ENCODE measurements at regions of chr11 and their contacts with region 1.

Region 1: GRCh38 chr11:62081378-62082291 is 42.2 kb upstream of the INCENP start:
- H3K4me3 ChIP-seq: no peak overlapping the region
- H3K27ac ChIP-seq: no peak overlapping the region
- H3K4me1 ChIP-seq: no peaks in the 10 kb centered on the region
- CTCF ChIP-seq: peak; percentile 76

Region 2: GRCh38 chr11:61777234-61778090 is 304.2 kb before region 1 on chr11:
- CTCF ChIA-PET with region 1: no interaction called
- POLR2A ChIA-PET with region 1: no interaction called
- H3K4me3 ChIP-seq: no peak overlapping the region
- H3K27ac ChIP-seq: no peak overlapping the region
- H3K4me1 ChIP-seq: no peaks in the 10 kb centered on the region
- CTCF ChIP-seq: no peak

Region 3: GRCh38 chr11:61792310-61793085 is 289.1 kb before region 1 on chr11 and contains the starts of genes FEN1 and TMEM258:
- CTCF ChIA-PET with region 1: interaction called, 49 read pairs
- POLR2A ChIA-PET with region 1: interaction called, 8 read pairs
- H3K4me3 ChIP-seq: peak within 1 kb of the TSS; percentile 87
- H3K27ac ChIP-seq: peak within 1 kb of the TSS; percentile 89
- H3K4me1 ChIP-seq: 0 out of 2 replicates have a peak, but pooled peaks cover 1% of the 10 kb centered on the region
- CTCF ChIP-seq: no peak

Region 4: DNA sequence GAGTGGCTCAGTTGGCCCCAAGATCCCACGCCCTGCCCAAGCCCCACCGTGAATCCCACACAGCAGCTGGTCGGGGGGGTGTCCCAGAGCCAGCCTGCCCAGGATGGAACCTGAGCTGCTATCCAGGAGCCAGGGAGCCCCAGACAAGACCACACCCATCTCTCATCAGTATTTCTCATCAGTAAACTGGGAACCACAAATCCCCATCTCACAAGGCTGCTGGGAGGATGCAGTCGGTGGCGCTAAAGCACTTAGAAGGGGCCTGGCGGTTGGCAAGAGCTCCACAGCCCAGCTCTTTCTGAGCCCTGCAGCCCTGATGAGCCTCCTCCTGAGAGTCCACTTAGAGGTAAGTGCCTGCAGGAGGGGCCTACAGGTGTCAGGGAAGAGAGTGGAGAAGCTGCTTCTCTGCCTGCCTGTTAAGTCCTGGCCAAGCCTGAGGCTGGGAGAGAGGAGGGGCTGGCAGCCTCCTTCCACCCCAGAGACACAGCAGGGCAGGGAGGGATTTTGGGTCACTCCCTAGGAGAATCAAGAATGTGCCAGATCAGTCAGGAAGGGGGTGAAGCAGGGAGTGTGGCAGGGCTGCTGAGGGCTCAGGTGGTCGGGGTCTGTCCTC is 196.4 kb before region 1 on chr11:
- CTCF ChIA-PET with region 1: interaction called, 18 read pairs
- POLR2A ChIA-PET with region 1: no interaction called
- H3K4me3 ChIP-seq: no peak overlapping the region
- H3K27ac ChIP-seq: no peak overlapping the region
- H3K4me1 ChIP-seq: no peaks in the 10 kb centered on the region; the same call in 1 of the 2 replicates
- CTCF ChIP-seq: no peak

Region 5: DNA sequence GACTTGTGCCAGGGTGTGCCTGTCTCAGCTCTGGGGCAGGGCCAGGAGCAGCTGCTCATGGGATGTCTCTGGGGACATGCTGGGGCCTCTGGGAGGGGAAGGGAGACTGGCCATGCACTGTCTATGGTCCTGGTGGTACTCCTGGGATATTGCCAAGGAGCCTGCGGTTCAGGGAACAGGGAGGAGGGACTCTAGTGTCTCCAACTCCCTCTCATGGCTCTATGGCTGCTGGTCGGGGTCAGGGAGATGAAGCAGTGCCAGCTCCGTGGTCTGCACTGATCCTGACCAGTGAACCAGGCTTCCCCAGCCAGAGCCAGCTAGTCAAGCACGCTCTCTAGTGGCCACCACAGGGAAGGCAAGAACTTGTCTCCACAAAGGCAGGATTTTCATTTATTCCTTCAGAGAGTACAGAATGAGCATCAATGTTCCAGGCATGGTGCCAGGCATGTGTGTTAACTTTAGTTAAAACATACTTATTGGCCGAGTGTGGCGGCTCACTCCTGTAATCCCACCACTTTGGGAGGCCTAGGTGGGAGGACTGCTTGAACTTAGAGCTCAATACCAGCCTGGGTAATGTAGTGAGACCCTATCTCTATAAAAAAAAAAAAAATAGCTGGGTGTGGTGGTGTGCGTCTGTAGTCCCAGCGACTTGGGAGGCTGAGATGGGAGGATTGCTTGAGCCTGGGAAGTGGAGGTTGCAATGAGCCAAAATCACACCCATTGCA is 134.0 kb before region 1 on chr11:
- CTCF ChIA-PET with region 1: interaction called, 62 read pairs
- POLR2A ChIA-PET with region 1: interaction called, 4 read pairs
- H3K4me3 ChIP-seq: no peak overlapping the region
- H3K27ac ChIP-seq: no peak overlapping the region
- H3K4me1 ChIP-seq: peaks cover 3% of the 10 kb centered on the region; the same call in 1 of the 2 replicates
- CTCF ChIP-seq: peak; percentile 77

Region 6: GRCh38 chr11:62024936-62025486 is 56.6 kb before region 1 on chr11:
- CTCF ChIA-PET with region 1: interaction called, 12 read pairs
- POLR2A ChIA-PET with region 1: no interaction called
- H3K4me3 ChIP-seq: no peak overlapping the region
- H3K27ac ChIP-seq: no peak overlapping the region
- H3K4me1 ChIP-seq: no peaks in the 10 kb centered on the region
- CTCF ChIP-seq: no peak

Region 7: DNA sequence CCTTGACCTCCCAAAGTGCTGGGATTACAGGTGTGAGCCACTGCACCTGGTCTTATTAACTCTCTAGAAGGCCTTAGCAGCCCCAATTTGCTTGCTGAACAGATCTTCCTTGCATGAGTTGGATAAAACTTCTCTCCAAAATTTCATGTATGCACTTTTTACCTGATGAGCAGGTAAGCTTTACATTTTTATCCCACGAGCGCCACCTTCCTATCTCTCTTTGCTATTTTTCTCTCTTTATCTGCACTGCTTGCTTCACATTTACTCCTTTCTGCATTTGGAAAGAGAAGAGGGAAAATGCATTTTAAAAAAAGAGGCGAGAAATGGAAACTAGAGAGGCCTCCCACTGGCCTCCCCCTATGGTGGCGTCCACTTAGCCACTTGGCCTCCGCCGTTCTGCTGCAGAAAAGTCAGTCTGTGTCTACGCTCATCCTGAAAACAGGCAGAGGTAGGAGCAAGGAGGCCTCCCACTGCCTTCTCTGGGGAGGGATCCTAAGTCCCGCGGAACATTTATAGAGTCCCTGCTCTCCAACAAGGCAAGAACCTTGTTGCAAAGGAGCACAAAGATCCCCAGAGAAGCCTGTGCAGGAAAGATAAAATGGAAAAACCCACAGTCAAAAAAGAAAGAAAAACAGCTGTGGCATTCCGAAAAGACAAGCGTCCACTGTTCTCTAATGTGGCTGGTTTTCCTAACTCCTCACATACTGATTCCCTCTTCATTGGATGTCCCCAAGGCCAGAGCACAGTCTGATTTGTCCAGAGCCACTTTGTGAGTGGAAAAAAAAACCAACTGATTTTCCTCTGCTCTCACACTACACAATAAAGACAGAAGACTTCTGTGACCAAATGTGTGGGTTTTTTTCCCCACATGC is 20.0 kb before region 1 on chr11:
- CTCF ChIA-PET with region 1: interaction called, 28 read pairs
- POLR2A ChIA-PET with region 1: no interaction called
- H3K4me3 ChIP-seq: no peak overlapping the region
- H3K27ac ChIP-seq: no peak overlapping the region
- H3K4me1 ChIP-seq: no peaks in the 10 kb centered on the region
- CTCF ChIP-seq: no peak

Region 8: GRCh38 chr11:62108017-62108750 is 26.5 kb after region 1 on chr11:
- CTCF ChIA-PET with region 1: interaction called, 88 read pairs
- POLR2A ChIA-PET with region 1: no interaction called
- H3K4me3 ChIP-seq: no peak overlapping the region
- H3K27ac ChIP-seq: no peak overlapping the region
- H3K4me1 ChIP-seq: no peaks in the 10 kb centered on the region
- CTCF ChIP-seq: peak; percentile 27; the same call in 1 of the 2 replicates

Measured in HEK293 (cell line).